Activated B cell treated with CpG ODN at 0.5 μM for 24 hours (primary cell): ENCODE measurements at regions of chr2 and their contacts with region 1.

Region 1: DNA sequence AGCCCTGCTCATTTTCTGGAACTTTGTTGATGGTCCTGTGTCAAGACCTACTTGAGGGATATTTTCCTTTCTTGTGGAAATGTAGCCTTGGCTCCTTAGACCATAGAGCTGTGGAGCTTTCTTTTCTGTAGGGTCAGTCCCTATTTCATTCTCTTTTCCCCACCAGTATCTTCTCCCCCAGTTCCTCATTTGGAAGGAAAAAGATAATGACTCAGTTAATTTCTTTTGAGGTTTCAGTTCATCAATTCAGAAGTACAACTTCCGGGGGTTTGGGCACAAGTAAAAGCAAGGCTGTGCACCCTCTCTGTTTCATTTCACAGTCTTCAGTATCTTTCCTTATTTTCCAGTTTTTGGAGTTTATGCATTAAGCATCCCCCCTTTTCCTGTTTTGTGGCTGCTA is 70.7 kb downstream of the CDC42EP3 start:
- DNase-seq: no peak
- ATAC-seq: peak; percentile 85
- H3K4me3 Mint-ChIP-seq: peak overlapping the region; percentile 60
- H3K27ac Mint-ChIP-seq: peak overlapping the region; percentile 37
- H3K4me1 Mint-ChIP-seq: peaks cover 33% of the 10 kb centered on the region
- H3K27me3 Mint-ChIP-seq: no peaks in the 10 kb centered on the region
- CTCF ChIP-seq: no peak

Region 2: DNA sequence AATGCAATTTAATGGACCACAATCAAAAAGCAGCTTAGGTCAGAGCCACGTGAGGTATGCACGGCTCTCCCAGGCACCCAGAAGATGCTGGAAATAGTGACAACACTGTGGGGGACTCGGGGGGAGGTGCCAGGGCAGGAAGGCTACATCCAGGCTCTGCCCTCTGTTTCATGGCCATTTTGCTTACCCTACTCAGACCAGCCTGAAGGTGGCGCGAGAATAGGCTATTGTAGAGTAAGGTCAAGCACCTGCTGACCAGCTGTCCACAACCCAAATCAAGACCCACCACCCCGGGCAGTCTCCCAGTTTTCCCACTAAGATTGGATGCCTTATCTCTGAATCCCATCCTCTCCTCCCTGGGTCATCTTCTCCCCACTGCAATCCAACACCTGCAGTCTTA is 788.5 kb before region 1 on chr2:
- CTCF ChIA-PET with region 1: no interaction called
- POLR2A ChIA-PET with region 1: no interaction called
- intact Hi-C with region 1: no loop called
- DNase-seq: no peak
- ATAC-seq: no peak
- H3K4me3 Mint-ChIP-seq: no peak overlapping the region
- H3K27ac Mint-ChIP-seq: no peak overlapping the region
- H3K4me1 Mint-ChIP-seq: no peaks in the 10 kb centered on the region
- H3K27me3 Mint-ChIP-seq: peaks cover 2% of the 10 kb centered on the region
- CTCF ChIP-seq: no peak

Region 3: DNA sequence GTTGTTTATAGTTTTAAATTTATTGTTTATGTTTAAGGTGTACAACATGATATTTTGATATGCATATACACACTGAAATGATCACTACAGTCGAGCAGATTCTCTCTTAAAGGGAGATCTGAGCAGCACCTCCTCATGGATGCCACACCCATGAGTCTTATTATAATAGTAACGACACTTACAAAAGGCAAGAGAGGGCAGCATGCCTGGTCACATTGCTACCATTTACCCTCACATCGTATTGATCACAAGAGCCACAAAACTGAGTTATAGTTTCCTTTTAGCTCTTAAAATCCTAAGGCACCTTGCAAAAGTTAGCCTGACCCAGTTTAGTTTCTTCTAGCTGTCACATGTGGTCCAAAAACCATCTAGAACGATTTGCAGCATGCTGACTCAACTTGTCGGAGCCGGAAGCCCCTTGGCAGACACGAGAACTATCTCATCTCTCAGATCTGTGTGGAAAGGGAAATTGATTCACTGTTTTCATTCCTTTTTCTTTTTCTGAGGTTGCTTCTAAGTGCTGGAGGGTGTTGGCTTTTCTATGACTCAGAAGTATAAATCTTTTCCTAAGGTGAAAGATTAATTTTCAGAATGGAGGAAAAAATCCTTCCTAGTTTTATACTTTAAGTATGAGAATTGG is 14.6 kb before region 1 on chr2:
- CTCF ChIA-PET with region 1: no interaction called
- POLR2A ChIA-PET with region 1: interaction called, 4 read pairs
- intact Hi-C with region 1: loop called (anchors 2 kb)
- DNase-seq: no peak
- ATAC-seq: peak; percentile 34
- H3K4me3 Mint-ChIP-seq: peak overlapping the region; percentile 25
- H3K27ac Mint-ChIP-seq: peak overlapping the region; percentile 22
- H3K4me1 Mint-ChIP-seq: peaks cover 56% of the 10 kb centered on the region
- H3K27me3 Mint-ChIP-seq: no peaks in the 10 kb centered on the region
- CTCF ChIP-seq: no peak

Region 4: DNA sequence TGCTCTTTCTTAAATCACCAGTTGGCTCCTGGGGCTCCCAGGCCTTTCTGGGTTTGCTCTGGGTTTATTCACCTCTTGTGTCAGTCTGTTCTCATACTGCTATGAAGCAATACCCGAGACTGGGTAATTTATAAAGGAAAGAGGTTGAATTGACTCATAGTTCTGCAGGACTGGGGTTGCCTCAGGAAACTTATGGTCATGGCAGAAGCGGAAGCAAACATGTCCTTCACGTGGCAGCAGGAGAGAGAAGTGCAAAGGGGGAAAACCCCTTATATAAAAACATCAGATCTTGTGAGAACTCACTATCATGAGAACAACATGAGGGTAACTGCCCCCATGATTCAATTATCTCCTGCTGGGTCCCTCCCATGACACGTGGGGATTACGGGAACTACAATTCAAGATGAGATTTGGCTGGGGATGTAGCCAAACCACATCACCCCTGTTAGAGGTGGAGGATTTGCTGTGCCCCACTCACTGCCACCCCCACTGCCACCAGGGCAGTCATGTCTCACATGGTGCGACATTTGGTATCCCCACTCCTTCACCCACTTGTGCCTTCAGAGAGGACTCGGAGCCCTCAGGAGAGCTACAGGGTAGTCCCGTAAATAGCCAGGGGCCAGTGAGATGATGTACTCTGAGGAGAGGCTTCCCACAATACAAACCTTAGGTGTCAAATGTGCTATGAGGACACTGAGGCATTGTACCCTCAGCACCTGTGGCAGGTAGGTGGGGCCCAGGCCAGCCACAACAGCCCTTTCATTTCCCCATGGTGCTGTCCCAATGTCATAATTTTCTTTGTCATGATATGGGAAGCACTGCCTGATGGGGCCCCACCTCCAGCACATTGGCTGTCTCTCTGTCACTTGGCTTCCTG is 35.0 kb after region 1 on chr2:
- CTCF ChIA-PET with region 1: no interaction called
- POLR2A ChIA-PET with region 1: interaction called, 6 read pairs
- intact Hi-C with region 1: loop called (anchors 1 kb)
- DNase-seq: peak; percentile 44
- ATAC-seq: peak; percentile 84
- H3K4me3 Mint-ChIP-seq: peak overlapping the region; percentile 52
- H3K27ac Mint-ChIP-seq: peak overlapping the region; percentile 95
- H3K4me1 Mint-ChIP-seq: peaks cover 50% of the 10 kb centered on the region
- H3K27me3 Mint-ChIP-seq: no peaks in the 10 kb centered on the region
- CTCF ChIP-seq: no peak

Region 5: GRCh38 chr2:37973615-37974353 is 373.0 kb after region 1 on chr2:
- CTCF ChIA-PET with region 1: no interaction called
- POLR2A ChIA-PET with region 1: no interaction called
- intact Hi-C with region 1: no loop called
- DNase-seq: no peak
- ATAC-seq: no peak
- H3K4me3 Mint-ChIP-seq: no peak overlapping the region
- H3K27ac Mint-ChIP-seq: no peak overlapping the region
- H3K4me1 Mint-ChIP-seq: peaks cover 13% of the 10 kb centered on the region
- H3K27me3 Mint-ChIP-seq: no peaks in the 10 kb centered on the region
- CTCF ChIP-seq: no peak